GM12878 (cell line): ENCODE measurements at regions of chrX and their contacts with region 1.

Region 1: DNA sequence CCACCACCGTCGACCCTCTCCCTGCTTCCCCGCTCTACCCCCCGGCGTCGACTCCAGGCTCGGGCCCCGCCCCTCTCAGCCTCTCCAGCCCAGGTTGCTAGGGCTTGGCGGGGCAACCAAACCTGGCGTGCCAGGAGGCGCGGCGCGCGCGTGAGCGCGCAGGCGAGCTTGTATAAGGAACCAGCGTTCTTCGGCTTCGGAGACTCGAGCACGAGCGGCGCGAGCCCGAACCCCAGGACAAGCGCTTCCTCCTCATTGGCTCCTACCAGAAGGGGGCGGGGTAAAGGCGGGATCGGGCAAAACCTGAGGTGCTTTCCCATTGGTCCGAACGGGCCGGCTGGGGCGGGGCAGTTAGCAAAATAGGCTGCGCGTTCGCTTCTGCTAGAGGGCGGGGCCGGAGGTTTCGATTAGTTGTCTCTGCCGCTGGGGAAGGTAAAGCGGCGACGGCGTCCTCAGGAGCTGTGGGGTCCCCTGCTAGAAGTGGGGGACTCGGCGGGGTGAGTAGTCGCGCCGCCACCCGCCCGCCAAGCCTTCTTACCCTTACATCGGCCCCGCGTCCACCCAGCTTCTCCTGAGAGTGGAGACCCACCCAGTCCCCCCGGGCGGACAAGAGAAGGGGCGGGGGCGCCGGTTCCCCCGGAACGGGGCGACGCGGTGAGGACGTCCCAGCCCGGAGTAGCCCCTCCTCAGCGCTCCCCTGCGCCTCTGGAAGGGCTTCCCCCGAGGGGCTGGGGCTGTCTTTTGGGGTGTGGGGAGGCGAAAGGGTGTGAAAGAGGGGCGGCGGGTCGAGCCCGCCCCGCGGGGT is at the start of gene CDKL5:
- DNase-seq: peak; percentile 75
- ATAC-seq: peak; percentile 95
- H3K4me3 ChIP-seq: peak within 1 kb of the TSS; percentile 64
- H3K27ac ChIP-seq: no peak within 1 kb of the TSS; the same call in 1 of the 2 replicates
- H3K4me1 ChIP-seq: peaks cover 2% of the 10 kb centered on the region; the same call in 1 of the 2 replicates
- H3K27me3 ChIP-seq: 0 out of 4 replicates have a peak, but pooled peaks cover 0 to 2% of the 10 kb centered on the region in 2 experiments
- CTCF ChIP-seq: no peak
- EP300 ChIP-seq: no peak
- POLR2A ChIP-seq: peak; percentile 67
- RAD21 ChIP-seq: no peak
- polyA plus RNA-seq, gene CDKL5: 1.4 to 2.3 TPM

Region 2: DNA sequence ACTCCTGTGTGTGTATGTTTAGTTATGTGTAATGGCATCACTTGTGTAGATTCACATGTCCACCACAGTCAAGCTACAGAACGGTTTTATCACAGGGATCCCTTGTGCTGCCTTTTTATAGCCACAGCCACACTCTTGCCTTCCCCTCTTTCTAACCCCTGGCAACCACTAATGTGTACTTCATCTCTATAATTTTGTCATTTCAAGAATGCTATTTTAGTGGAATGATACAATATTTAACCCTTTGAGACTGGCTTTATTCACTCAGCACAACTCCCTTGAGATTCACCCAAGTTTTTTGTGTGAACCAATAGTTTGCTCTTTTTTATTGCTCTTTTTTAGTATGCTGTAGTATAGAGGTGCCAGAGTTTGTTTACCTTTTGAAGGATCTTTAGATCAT is 112.1 kb after region 1 on chrX:
- CTCF ChIA-PET with region 1: no interaction called
- POLR2A ChIA-PET with region 1: no interaction called
- RAD21 ChIA-PET with region 1: no interaction called
- SMC1A ChIA-PET with region 1: no interaction called
- in situ Hi-C with region 1: no loop called
- intact Hi-C with region 1: loop called (anchors 5 kb)
- DNase-seq: peak; percentile 9
- ATAC-seq: peak; percentile 92
- H3K4me3 ChIP-seq: no peak overlapping the region
- H3K27ac ChIP-seq: peak overlapping the region; percentile 13; the same call in 1 of the 2 replicates
- H3K4me1 ChIP-seq: no peaks in the 10 kb centered on the region
- H3K27me3 ChIP-seq: no peaks in the 10 kb centered on the region
- CTCF ChIP-seq: no peak
- EP300 ChIP-seq: no peak
- POLR2A ChIP-seq: no peak
- RAD21 ChIP-seq: peak; percentile 19; the same call in 1 of the 2 replicates